ENCODE measurements at regions of chr10 and their contacts with region 1.

Region 1: GRCh38 chr10:100267237-100268104 is at the start of gene CWF19L1:
- DNase-seq: peak; percentile 50 to 86 (median 64)
- ATAC-seq: peak; percentile 89
- H3K4me3 ChIP-seq: peak within 1 kb of the TSS; percentile 98
- H3K4me3 Mint-ChIP-seq: peak within 1 kb of the TSS; percentile 100
- H3K27ac ChIP-seq: peak within 1 kb of the TSS; percentile 69 to 85
- H3K27ac Mint-ChIP-seq: peak within 1 kb of the TSS; percentile 92
- H3K4me1 ChIP-seq: peaks cover 31% of the 10 kb centered on the region
- H3K4me1 Mint-ChIP-seq: peaks cover 26% of the 10 kb centered on the region
- H3K27me3 ChIP-seq: no peaks in the 10 kb centered on the region
- H3K27me3 Mint-ChIP-seq: no peaks in the 10 kb centered on the region
- CTCF ChIP-seq: no peak
- total RNA-seq, gene CWF19L1: 60.1 to 66.7 TPM

Region 2: GRCh38 chr10:100286051-100287033 is 18.9 kb after region 1 on chr10 and contains the start of gene BLOC1S2:
- CTCF ChIA-PET with region 1: no interaction called
- POLR2A ChIA-PET with region 1: interaction called, 10 read pairs
- intact Hi-C with region 1: loop called in 1 of 2 experiments (anchors 2 kb)
- DNase-seq: peak; percentile 70 to 92 (median 82)
- ATAC-seq: peak; percentile 81
- H3K4me3 ChIP-seq: peak within 1 kb of the TSS; percentile 96
- H3K4me3 Mint-ChIP-seq: peak within 1 kb of the TSS; percentile 98
- H3K27ac ChIP-seq: peak within 1 kb of the TSS; percentile 85 to 92
- H3K27ac Mint-ChIP-seq: peak within 1 kb of the TSS; percentile 97
- H3K4me1 ChIP-seq: peaks cover 22% of the 10 kb centered on the region
- H3K4me1 Mint-ChIP-seq: peaks cover 30% of the 10 kb centered on the region
- H3K27me3 ChIP-seq: no peaks in the 10 kb centered on the region
- H3K27me3 Mint-ChIP-seq: no peaks in the 10 kb centered on the region
- CTCF ChIP-seq: no peak
- total RNA-seq, gene BLOC1S2: 49.4 to 55.9 TPM

Region 3: DNA sequence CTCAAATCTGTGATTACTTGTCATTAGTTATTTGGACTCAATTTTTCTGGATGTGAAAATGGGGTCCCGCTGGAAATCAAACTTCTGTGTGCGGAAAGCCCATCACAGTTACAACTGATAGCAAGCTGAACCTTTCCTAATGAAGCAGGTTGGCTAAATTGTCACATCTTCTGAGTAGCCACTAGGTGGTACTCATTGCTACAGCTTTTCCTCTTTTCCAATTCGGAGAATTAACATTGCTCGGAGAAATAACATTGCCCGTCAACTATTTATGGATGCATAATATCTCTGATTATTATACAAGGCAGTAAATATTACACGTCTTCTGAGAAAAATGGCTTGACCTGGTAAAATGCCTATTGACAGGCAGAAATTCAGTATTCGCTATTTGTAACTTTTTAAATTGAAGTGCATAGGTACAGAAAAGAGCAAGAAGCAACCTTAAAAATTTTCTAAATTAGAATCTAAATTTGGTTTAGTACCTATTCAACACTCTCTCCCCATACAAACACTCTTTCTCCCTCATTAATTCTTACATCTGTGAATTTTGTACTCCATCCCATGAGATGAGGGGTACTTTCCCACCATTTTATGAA is 36.4 kb after region 1 on chr10:
- CTCF ChIA-PET with region 1: no interaction called
- POLR2A ChIA-PET with region 1: no interaction called
- intact Hi-C with region 1: no loop called
- DNase-seq: peak in 1 of 14 experiments; percentile 17
- ATAC-seq: no peak
- H3K4me3 ChIP-seq: no peak overlapping the region
- H3K4me3 Mint-ChIP-seq: no peak overlapping the region
- H3K27ac ChIP-seq: no peak overlapping the region
- H3K27ac Mint-ChIP-seq: no peak overlapping the region
- H3K4me1 ChIP-seq: no peaks in the 10 kb centered on the region
- H3K4me1 Mint-ChIP-seq: no peaks in the 10 kb centered on the region
- H3K27me3 ChIP-seq: peaks cover 4 to 21% of the 10 kb centered on the region in 2 experiments
- H3K27me3 Mint-ChIP-seq: peaks cover 77% of the 10 kb centered on the region
- CTCF ChIP-seq: peak; percentile 42